Spleen (tissue), 13 donors: ENCODE measurements at regions of chr1 and their contacts with region 1.

Region 1: DNA sequence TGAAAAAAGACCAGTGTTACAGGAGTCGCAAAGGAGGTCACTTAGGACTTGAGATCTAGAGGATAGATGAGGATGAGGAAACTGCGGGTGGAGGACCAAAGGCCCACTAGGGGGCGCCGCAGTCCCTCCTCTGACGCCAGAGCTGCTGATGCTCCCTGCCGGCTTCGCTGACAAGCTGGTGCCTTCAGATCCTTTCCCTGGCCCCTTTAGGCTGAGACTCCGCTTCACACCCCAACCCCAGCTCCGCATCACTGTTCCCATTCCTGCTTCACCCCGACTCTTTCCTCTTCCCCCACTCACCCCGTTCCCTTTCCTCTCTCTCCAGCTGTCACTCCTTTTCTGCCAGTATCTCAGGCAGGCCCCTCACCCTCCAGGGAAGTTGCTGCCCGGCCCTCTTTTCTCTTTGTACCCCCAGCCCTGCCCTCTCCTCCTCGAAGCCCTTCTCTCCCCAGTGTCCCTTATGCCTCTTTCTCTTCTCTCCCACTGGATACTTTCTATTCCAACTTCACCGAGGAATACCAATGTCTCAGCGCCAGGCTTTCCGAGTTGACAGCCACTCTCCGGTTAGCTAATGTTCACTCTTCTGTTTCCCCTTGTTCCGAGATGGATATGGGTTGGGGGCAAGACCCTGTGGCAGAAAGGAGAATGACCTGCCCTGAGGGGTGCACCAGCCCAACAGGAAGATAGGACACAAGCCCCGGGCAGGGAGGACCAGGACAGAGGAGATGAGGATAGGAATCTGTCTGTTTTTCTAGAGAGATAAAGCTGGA is 4.5 kb downstream of the KCNJ9 start:
- DNase-seq: peak; percentile 91
- H3K4me3 ChIP-seq: no peak overlapping the region
- H3K27ac ChIP-seq: no peak overlapping the region
- H3K4me1 ChIP-seq: peaks cover 0 to 13% (median 10%) of the 10 kb centered on the region in 6 donors
- H3K27me3 ChIP-seq: peaks cover 0 to 40% (median 29%) of the 10 kb centered on the region in 7 donors
- CTCF ChIP-seq: peak; percentile 8 to 90 (median 79)
- POLR2A ChIP-seq: no peak

Region 2: GRCh38 chr1:160046494-160047110 is 39.3 kb before region 1 on chr1:
- intact Hi-C with region 1: loop called (anchors 2 kb)
- DNase-seq: no peak
- H3K4me3 ChIP-seq: peak overlapping the region in 4 of 8 donors; percentile 9 to 58 (median 18)
- H3K27ac ChIP-seq: no peak overlapping the region
- H3K4me1 ChIP-seq: peaks cover 6 to 17% (median 12%) of the 10 kb centered on the region in 6 donors
- H3K27me3 ChIP-seq: peaks cover 0 to 16% (median 0%) of the 10 kb centered on the region in 7 donors
- CTCF ChIP-seq: peak; percentile 29 to 74 (median 60)
- POLR2A ChIP-seq: no peak

Region 3: GRCh38 chr1:160169553-160170399 is 83.9 kb after region 1 on chr1:
- intact Hi-C with region 1: no loop called
- DNase-seq: no peak
- H3K4me3 ChIP-seq: no peak overlapping the region
- H3K27ac ChIP-seq: no peak overlapping the region
- H3K4me1 ChIP-seq: peaks cover 3 to 26% (median 12%) of the 10 kb centered on the region in 6 donors
- H3K27me3 ChIP-seq: no peaks in the 10 kb centered on the region
- CTCF ChIP-seq: no peak
- POLR2A ChIP-seq: no peak